Dendritic cell treated with granulocyte-macrophage colony-stimulating factor and Interleukin-4, amounts not matched to agents 40 ng/mL and 50 ng/mL, for 4 days (primary cell): ENCODE measurements at regions of chr17 and their contacts with region 1.

Region 1: DNA sequence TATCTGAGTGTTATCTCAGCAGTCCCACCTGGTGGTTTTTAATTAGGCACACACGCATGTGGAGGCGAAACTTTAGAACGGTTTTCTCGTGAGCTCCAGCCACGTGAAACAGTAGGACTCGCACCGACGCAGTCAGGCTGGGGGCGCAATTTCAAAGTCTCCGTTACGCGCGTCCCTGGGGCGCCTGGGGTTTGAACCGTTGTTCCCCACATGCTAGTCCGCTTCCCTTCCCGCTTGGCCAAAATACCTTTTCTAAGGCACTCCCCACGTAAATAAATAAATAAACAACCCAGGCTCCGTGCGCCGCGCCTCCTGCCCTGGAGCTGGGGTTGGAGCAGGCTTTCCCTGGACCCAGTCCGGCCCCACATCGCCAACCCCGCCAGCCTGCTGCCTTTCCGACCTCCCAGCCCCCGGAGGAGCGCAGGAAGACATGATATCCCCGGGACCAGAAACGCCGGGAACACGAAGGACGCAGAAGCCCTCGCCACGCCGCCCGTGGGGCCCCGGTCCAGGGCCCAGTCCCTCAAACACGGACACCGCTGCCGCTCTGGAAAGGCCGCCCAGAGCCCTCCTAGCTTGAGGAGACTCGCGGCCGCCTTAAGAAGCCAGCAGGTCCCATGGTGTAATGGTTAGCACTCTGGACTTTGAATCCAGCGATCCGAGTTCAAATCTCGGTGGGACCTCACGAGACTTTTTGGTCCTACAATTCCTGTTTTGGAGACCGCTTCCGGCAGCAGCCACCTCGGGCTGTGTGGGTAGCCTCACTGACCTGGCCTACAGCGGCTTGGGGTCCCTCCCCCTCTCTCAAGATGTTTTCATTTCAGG is 18.2 kb downstream of the GNGT2 start:
- H3K4me3 Mint-ChIP-seq: peak overlapping the region; percentile 86
- H3K27ac Mint-ChIP-seq: peak overlapping the region; percentile 97
- H3K4me1 Mint-ChIP-seq: peaks cover 46% of the 10 kb centered on the region
- H3K27me3 Mint-ChIP-seq: no peaks in the 10 kb centered on the region

Region 2: GRCh38 chr17:49217651-49218413 is 25.7 kb after region 1 on chr17:
- intact Hi-C with region 1: loop called (anchors 2 kb)
- H3K4me3 Mint-ChIP-seq: peak overlapping the region; percentile 70
- H3K27ac Mint-ChIP-seq: peak overlapping the region; percentile 85
- H3K4me1 Mint-ChIP-seq: peaks cover 79% of the 10 kb centered on the region
- H3K27me3 Mint-ChIP-seq: no peaks in the 10 kb centered on the region